Endothelial cell of umbilical vein (primary cell): ENCODE measurements at regions of chr14 and their contacts with region 1.

Region 1: DNA sequence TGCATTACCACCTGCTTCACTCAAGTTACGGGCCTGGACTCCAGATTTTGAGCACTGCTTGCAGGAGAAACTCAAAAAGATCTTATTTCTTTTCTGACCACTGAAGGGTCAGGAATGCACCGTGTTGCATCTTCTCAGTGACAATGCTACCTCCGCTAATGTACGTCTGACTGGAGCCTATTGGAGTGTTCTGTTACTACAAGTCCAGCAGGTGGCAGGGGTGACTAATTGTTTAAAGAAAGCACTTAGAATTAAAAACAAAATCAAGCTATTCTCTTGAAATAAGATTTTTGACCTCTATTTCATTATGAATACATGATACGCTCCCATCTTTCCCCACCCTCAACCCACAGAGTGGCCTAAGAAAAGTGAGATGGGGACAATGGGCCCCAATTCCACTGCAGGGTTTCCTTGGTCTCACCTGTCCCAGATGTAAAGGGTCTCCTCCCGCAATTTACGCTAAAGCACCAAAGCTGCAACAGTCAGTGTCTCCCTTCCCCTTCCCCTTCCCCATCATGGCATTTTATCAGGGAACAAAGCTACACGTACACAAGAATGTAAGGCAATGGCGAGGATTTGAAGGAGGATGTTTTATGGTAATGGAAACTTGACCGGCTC is 2.2 kb downstream of the TBPL2 start:
- DNase-seq: peak; percentile 58
- H3K4me3 ChIP-seq: no peak overlapping the region
- H3K27ac ChIP-seq: no peak overlapping the region
- H3K4me1 ChIP-seq: no peaks in the 10 kb centered on the region
- H3K27me3 ChIP-seq: peaks cover 2 to 5% of the 10 kb centered on the region in 2 experiments
- CTCF ChIP-seq: peak; percentile 53 to 56
- POLR2A ChIP-seq: no peak

Region 2: GRCh38 chr14:54712465-54713200 is 725.5 kb before region 1 on chr14:
- CTCF ChIA-PET with region 1: no interaction called
- POLR2A ChIA-PET with region 1: no interaction called
- dilution Hi-C with region 1: no loop called
- intact Hi-C with region 1: no loop called
- DNase-seq: peak; percentile 71
- H3K4me3 ChIP-seq: no peak overlapping the region
- H3K27ac ChIP-seq: peak overlapping the region; percentile 32
- H3K4me1 ChIP-seq: peaks cover 16% of the 10 kb centered on the region
- H3K27me3 ChIP-seq: no peaks in the 10 kb centered on the region
- CTCF ChIP-seq: no peak
- POLR2A ChIP-seq: no peak

Region 3: DNA sequence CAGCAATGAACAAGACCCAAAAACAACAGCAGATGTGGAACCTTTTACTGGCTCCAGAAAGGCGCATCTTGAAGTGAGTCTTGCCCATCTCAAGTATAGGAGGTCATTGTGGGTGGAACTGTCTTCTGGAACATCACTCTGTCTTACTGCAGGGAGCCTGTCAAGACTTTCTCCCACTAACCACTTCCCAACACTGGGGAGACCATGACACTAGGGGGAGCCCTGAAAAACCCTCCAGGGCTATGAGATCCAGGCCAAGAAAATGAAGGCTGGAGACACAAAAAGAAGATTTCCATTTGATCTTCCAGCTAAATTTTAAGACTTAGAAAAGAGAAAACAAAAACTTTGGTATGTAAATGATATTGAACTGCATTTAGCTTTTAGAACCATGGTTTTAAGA is 13.1 kb before region 1 on chr14:
- CTCF ChIA-PET with region 1: interaction called, 16 read pairs
- POLR2A ChIA-PET with region 1: no interaction called
- dilution Hi-C with region 1: no loop called
- intact Hi-C with region 1: no loop called
- DNase-seq: no peak
- H3K4me3 ChIP-seq: no peak overlapping the region
- H3K27ac ChIP-seq: no peak overlapping the region
- H3K4me1 ChIP-seq: no peaks in the 10 kb centered on the region
- H3K27me3 ChIP-seq: peaks cover 0 to 4% of the 10 kb centered on the region in 2 experiments
- CTCF ChIP-seq: peak in 1 of 2 donors; percentile 6
- POLR2A ChIP-seq: no peak

Region 4: GRCh38 chr14:55579724-55580469 is 141.7 kb after region 1 on chr14 and contains the start of gene KTN1:
- CTCF ChIA-PET with region 1: interaction called, 11 read pairs
- POLR2A ChIA-PET with region 1: no interaction called
- dilution Hi-C with region 1: no loop called
- intact Hi-C with region 1: no loop called
- DNase-seq: peak; percentile 76
- H3K4me3 ChIP-seq: peak within 1 kb of the TSS; percentile 62 to 87 (median 73)
- H3K27ac ChIP-seq: peak within 1 kb of the TSS; percentile 70
- H3K4me1 ChIP-seq: peaks cover 8% of the 10 kb centered on the region
- H3K27me3 ChIP-seq: no peaks in the 10 kb centered on the region
- CTCF ChIP-seq: no peak
- POLR2A ChIP-seq: peak; percentile 67
- total RNA-seq, gene KTN1: 135 and 148 TPM in 2 replicates

Region 5: DNA sequence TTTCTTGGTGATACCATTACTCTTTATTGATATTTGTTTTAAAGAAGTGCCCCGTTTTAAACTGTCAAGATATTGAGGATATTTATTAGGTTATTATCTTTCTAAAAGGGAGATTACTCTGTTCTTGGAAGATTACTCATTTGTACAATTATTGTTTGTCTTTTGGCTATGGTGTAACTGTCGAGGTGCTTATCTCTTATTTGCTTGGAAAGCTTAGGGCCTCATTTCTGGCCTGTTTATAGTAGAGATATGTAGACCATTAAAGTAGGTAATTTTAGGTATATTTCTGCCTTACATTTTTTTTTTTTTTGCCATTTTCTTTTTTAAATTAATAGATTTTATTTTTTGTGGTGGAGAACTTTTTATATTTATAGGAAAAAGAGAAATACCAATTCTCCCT is 216.1 kb after region 1 on chr14:
- CTCF ChIA-PET with region 1: interaction called, 30 read pairs
- POLR2A ChIA-PET with region 1: no interaction called
- dilution Hi-C with region 1: no loop called
- intact Hi-C with region 1: no loop called
- DNase-seq: no peak
- H3K4me3 ChIP-seq: no peak overlapping the region
- H3K27ac ChIP-seq: no peak overlapping the region
- H3K4me1 ChIP-seq: no peaks in the 10 kb centered on the region
- H3K27me3 ChIP-seq: no peaks in the 10 kb centered on the region
- CTCF ChIP-seq: no peak
- POLR2A ChIP-seq: no peak

Region 6: GRCh38 chr14:55684956-55685584 is 246.9 kb after region 1 on chr14:
- CTCF ChIA-PET with region 1: interaction called, 20 read pairs
- POLR2A ChIA-PET with region 1: no interaction called
- dilution Hi-C with region 1: no loop called
- intact Hi-C with region 1: no loop called
- DNase-seq: no peak
- H3K4me3 ChIP-seq: no peak overlapping the region
- H3K27ac ChIP-seq: no peak overlapping the region
- H3K4me1 ChIP-seq: peaks cover 10% of the 10 kb centered on the region
- H3K27me3 ChIP-seq: no peaks in the 10 kb centered on the region
- CTCF ChIP-seq: no peak
- POLR2A ChIP-seq: no peak

Region 7: GRCh38 chr14:55707365-55707804 is 269.2 kb after region 1 on chr14:
- CTCF ChIA-PET with region 1: interaction called, 14 read pairs
- POLR2A ChIA-PET with region 1: no interaction called
- dilution Hi-C with region 1: no loop called
- intact Hi-C with region 1: no loop called
- DNase-seq: peak; percentile 51
- H3K4me3 ChIP-seq: no peak overlapping the region
- H3K27ac ChIP-seq: no peak overlapping the region
- H3K4me1 ChIP-seq: no peaks in the 10 kb centered on the region
- H3K27me3 ChIP-seq: no peaks in the 10 kb centered on the region
- CTCF ChIP-seq: peak; percentile 28 to 53
- POLR2A ChIP-seq: no peak

Region 8: GRCh38 chr14:56474419-56475022 is 1036.3 kb after region 1 on chr14:
- CTCF ChIA-PET with region 1: interaction called, 196 read pairs
- POLR2A ChIA-PET with region 1: no interaction called
- dilution Hi-C with region 1: no loop called
- intact Hi-C with region 1: no loop called
- DNase-seq: peak; percentile 54
- H3K4me3 ChIP-seq: no peak overlapping the region
- H3K27ac ChIP-seq: no peak overlapping the region
- H3K4me1 ChIP-seq: no peaks in the 10 kb centered on the region
- H3K27me3 ChIP-seq: peaks cover 0 to 8% of the 10 kb centered on the region in 2 experiments
- CTCF ChIP-seq: peak; percentile 63 to 64
- POLR2A ChIP-seq: no peak